ENCODE measurements at regions of chr12 and their contacts with region 1.

Region 1: DNA sequence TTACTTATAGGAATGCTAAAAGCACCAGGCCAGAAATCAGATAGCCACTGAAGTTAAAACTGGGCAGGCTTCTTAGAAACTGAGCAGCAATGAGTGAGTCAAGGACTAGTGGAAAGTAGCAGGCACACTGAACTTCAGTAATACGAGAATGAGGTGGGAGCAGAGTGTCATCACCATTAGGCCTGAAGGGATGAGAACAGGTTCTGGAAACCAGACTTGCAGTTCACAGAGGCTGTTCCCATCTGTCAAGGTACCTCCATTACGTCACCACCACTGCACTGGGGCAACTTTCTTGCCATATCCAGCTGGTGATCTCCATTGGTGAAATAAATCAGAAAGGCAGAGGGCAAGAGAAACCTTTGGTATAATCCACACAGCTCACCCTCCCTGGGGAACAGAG is 15.6 kb downstream of the ZNF10 start:
- DNase-seq: no peak
- H3K4me3 ChIP-seq: no peak overlapping the region
- H3K27me3 ChIP-seq: no peaks in the 10 kb centered on the region
- CTCF ChIP-seq: no peak

Region 2: GRCh38 chr12:133130038-133130807 is 15.8 kb before region 1 on chr12 and contains the starts of genes ZNF10 and ZNF891:
- CTCF ChIA-PET with region 1: interaction called, 3 read pairs
- POLR2A ChIA-PET with region 1: interaction called, 13 read pairs
- DNase-seq: peak; percentile 76
- H3K4me3 ChIP-seq: peak within 1 kb of the TSS; percentile 97
- H3K27me3 ChIP-seq: no peaks in the 10 kb centered on the region; the same call in 1 of the 2 replicates
- CTCF ChIP-seq: no peak
- polyA plus RNA-seq, gene ZNF10: 2.0 and 4.3 TPM in 2 replicates
- polyA plus RNA-seq, gene ZNF891: 0.21 and 0.47 TPM in 2 replicates

Measured in BJ (cell line).